A673 (cell line): ENCODE measurements at regions of chr9 and their contacts with region 1.

Region 1: DNA sequence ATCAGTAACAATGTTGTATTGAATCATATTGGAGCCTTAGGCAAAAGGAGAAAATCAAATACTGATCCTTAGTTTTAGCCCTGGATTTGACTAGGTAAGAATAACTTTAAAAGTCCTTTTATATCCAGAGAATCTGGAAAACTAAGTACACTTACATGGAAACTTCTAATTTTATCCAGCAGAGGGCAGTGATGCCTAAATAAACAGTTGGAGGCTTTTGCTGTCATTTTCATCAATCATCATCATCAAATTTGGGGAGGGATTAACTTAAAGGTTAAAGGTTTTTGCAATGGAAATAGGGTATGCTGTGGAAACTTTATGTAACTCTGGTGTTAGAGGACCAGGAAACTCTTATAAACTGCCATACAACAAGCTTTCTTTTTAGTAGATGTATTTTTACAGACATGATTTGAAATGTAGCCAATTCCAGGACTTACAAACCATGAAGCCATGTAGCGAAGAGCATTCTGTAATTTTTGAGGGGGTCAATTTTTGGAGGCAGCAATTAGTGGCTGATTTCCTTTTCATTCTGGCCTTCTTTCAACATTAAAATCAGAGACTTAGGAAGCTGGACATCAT is 112.7 kb downstream of the OSTF1 start:
- DNase-seq: peak; percentile 57
- H3K4me3 ChIP-seq: no peak overlapping the region
- H3K27ac ChIP-seq: no peak overlapping the region
- H3K4me1 ChIP-seq: no peaks in the 10 kb centered on the region
- H3K27me3 ChIP-seq: peaks cover 4% of the 10 kb centered on the region
- CTCF ChIP-seq: peak; percentile 70

Region 2: GRCh38 chr9:75148561-75148960 is 52.4 kb before region 1 on chr9:
- CTCF ChIA-PET with region 1: no interaction called
- POLR2A ChIA-PET with region 1: no interaction called
- intact Hi-C with region 1: no loop called
- DNase-seq: no peak
- H3K4me3 ChIP-seq: no peak overlapping the region
- H3K27ac ChIP-seq: no peak overlapping the region
- H3K4me1 ChIP-seq: no peaks in the 10 kb centered on the region
- H3K27me3 ChIP-seq: no peaks in the 10 kb centered on the region
- CTCF ChIP-seq: no peak

Region 3: DNA sequence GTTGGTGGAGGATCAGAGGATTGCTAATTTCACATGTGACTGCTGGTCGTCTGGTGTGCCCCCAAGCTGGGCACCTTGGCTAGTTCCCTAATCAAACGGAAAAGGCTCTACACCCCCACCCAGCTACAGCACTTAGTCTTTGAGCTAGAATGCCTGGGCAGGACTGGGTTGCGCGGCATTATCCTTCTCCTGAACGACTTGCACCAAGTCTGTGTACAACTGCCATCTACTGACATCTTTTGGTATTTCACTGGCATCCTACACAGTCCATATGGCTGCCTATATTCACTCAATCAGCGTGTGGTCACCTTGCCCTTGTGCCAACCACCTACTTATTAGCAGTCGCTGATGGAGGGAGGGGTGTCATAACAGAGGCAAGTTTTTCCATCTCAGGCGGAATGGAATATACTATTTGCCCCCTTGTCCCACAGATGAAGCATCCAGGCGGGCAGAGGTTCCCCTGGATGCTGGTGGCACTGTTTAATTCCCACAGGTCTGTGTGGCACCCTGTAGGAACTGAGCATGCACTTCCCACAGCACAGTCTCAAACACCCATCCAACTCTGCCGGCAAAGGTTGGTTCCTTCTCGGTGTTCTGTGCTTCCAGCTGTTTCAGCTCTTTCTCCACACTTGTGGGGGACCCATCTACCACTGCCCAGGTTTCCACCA is 37.5 kb after region 1 on chr9:
- CTCF ChIA-PET with region 1: no interaction called
- POLR2A ChIA-PET with region 1: no interaction called
- intact Hi-C with region 1: loop called (anchors 1 kb)
- DNase-seq: peak; percentile 75
- H3K4me3 ChIP-seq: no peak overlapping the region
- H3K27ac ChIP-seq: no peak overlapping the region
- H3K4me1 ChIP-seq: no peaks in the 10 kb centered on the region
- H3K27me3 ChIP-seq: peaks cover 2% of the 10 kb centered on the region
- CTCF ChIP-seq: peak; percentile 63

Region 4: DNA sequence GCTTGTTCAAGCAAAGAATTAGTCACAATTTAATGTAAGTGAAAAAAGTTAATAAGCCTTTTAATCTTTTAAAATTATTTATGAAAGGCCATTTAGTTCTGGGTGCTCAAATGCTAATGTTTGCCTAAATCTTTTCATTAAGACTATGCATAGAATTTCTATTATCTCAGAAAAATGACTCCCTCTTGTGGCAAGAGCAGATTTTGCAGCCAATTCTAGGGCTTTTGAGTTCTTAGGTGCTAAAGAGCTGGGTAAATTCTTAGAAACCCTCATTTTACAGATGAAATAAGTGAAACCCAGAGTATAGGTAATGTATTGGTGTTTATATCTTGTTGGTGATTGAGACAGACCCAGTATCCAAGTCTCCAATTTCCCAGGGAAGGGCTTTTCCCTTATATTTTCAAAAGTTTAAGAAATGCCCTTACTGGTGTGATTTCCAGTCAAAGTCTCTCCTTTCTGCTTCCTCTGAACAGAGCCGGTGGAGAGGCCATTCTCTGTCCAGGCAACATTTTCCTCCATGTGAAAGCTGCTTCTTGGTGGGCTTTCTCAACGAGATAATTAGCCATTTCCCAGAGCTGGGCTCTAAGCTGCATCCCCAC is 665.4 kb after region 1 on chr9:
- CTCF ChIA-PET with region 1: no interaction called
- POLR2A ChIA-PET with region 1: no interaction called
- intact Hi-C with region 1: loop called (anchors 1 kb)
- DNase-seq: peak; percentile 56
- H3K4me3 ChIP-seq: no peak overlapping the region
- H3K27ac ChIP-seq: no peak overlapping the region
- H3K4me1 ChIP-seq: no peaks in the 10 kb centered on the region
- H3K27me3 ChIP-seq: no peaks in the 10 kb centered on the region
- CTCF ChIP-seq: peak; percentile 78

Region 5: DNA sequence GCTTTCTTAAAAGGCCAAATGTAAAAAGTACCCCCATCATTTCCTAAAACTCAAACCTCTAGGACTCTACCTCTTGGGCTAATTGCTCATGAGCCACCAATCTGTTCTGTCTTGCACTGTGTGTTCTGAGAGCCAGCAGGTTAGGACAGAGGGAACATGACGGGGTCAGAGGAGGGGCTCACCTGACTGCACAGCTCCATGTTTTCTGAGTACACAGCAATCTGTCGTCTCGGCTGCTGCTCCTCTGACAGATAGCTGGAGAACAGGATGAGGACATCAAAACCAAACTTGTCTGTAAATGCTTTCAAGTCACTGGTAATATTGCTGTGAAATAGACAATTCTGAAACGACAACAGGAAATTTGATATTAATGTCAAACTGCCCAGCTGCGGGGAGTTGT is 1512.4 kb after region 1 on chr9:
- CTCF ChIA-PET with region 1: no interaction called
- POLR2A ChIA-PET with region 1: no interaction called
- intact Hi-C with region 1: loop called (anchors 5 kb)
- DNase-seq: no peak
- H3K4me3 ChIP-seq: no peak overlapping the region
- H3K27ac ChIP-seq: no peak overlapping the region
- H3K4me1 ChIP-seq: no peaks in the 10 kb centered on the region
- H3K27me3 ChIP-seq: peaks cover 47% of the 10 kb centered on the region
- CTCF ChIP-seq: no peak